ENCODE measurements at regions of chr2 and their contacts with region 1.

Region 1: DNA sequence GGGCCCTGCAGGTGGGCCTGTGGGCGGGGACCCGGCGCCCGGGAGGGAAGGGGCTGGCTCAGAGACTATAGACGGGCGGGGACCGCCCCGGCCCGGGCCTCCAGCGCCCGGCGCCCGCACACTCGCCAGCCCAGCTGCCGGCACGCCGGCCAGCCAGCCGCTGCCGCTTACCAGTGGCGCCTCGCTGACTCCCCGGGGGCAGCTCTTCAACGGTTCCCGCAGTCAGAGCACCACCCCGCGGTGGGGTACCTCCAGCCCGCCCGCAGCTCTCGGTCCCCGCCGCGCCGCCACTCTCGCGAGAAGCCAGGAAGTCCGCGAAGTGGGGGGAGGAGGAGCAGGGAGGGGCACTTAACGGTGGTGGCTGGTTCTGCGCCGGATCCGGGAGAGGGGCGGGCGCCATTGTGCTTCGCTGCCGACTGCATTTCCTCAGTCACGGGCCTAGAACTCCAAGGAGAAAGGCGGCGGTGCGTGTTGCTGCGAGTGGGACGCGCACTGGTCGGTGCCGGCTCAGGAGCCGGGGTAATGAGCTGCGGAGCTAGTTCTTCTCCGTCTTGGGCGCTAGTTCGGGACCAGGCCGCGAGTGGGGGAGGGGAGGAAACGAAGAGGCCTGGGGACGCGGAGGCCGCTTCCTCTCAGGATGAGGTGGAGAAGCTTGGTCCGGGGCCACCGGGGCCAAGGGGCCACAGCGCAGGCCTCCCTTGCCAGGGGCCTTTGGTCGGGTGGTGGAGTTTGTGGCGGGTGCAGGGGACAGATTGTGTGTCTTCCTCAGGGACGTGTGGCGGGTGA is at the start of gene MARCHF7:
- DNase-seq: peak; percentile 99
- H3K4me3 ChIP-seq: peak within 1 kb of the TSS; percentile 85 to 95
- H3K27ac ChIP-seq: peak within 1 kb of the TSS; percentile 93 to 97
- H3K4me1 ChIP-seq: peaks cover 6 to 14% of the 10 kb centered on the region in 2 experiments; a peak in 3 of 4 replicates
- H3K27me3 ChIP-seq: no peaks in the 10 kb centered on the region
- CTCF ChIP-seq: peak; percentile 69
- EP300 ChIP-seq: no peak
- RAD21 ChIP-seq: peak; percentile 66
- polyA plus RNA-seq, gene MARCHF7: 18.4 and 20.3 TPM in 2 replicates

Region 2: GRCh38 chr2:159615140-159615951 is 97.0 kb before region 1 on chr2:
- CTCF ChIA-PET with region 1: interaction called, 11 read pairs
- POLR2A ChIA-PET with region 1: interaction called, 26 read pairs
- DNase-seq: peak; percentile 87
- H3K4me3 ChIP-seq: peak overlapping the region; percentile 80 to 85
- H3K27ac ChIP-seq: peak overlapping the region; percentile 99
- H3K4me1 ChIP-seq: peaks cover 15 to 24% of the 10 kb centered on the region in 2 experiments; a peak in 2 of 4 replicates
- H3K27me3 ChIP-seq: no peaks in the 10 kb centered on the region
- CTCF ChIP-seq: no peak
- EP300 ChIP-seq: 0 out of 4 replicates have a peak, but pooled peaks of 1 of the 2 experiments have one; percentile 5
- RAD21 ChIP-seq: peak; percentile 28; the same call in 1 of the 2 replicates

Region 3: GRCh38 chr2:159695795-159696448 is 16.4 kb before region 1 on chr2:
- CTCF ChIA-PET with region 1: interaction called, 10 read pairs
- POLR2A ChIA-PET with region 1: interaction called, 5 read pairs
- DNase-seq: no peak
- H3K4me3 ChIP-seq: no peak overlapping the region
- H3K27ac ChIP-seq: no peak overlapping the region
- H3K4me1 ChIP-seq: no peaks in the 10 kb centered on the region
- H3K27me3 ChIP-seq: no peaks in the 10 kb centered on the region
- CTCF ChIP-seq: no peak
- EP300 ChIP-seq: no peak
- RAD21 ChIP-seq: no peak

Region 4: GRCh38 chr2:159807183-159808031 is 95.1 kb after region 1 on chr2:
- CTCF ChIA-PET with region 1: interaction called, 10 read pairs
- POLR2A ChIA-PET with region 1: no interaction called
- DNase-seq: peak; percentile 69
- H3K4me3 ChIP-seq: peak overlapping the region in 1 of 2 experiments; percentile 48; a peak in 1 of 4 replicates
- H3K27ac ChIP-seq: no peak overlapping the region
- H3K4me1 ChIP-seq: peaks cover 0 to 5% of the 10 kb centered on the region in 2 experiments; a peak in 2 of 4 replicates
- H3K27me3 ChIP-seq: no peaks in the 10 kb centered on the region
- CTCF ChIP-seq: peak; percentile 79
- EP300 ChIP-seq: no peak
- RAD21 ChIP-seq: peak; percentile 79